Activated T-helper 2 cell treated with anti-CD3 and anti-CD28 coated beads, Interferon-gamma antibody, Interleukin-2, Interleukin-4, amounts not matched to agents 10 μg/mL and 5 μg/mL and 100 μg/mL, durations not matched to agents 14 hours and 24 hours and 36 hours (primary cell): ENCODE measurements at regions of chr3 and their contacts with region 1.

Region 1: DNA sequence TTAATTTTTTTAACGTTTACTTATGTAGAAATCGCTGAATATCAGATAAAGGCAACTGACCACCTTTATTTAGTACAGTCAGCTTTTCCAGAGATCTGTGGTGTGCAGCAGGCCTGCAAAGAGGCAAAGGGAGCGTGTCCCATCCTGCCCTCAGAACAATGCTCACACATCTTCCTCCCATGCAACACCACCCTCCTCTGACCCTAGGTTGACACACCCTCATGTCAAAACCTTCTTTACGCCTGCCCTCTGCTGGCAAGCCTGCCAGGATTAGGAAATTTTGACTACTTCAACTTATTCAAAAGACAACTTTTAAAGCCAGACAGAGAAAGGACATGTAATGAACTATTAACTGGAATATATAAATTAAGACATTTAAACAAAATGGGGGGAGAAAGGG is 513.7 kb downstream of the FOXP1 start:
- DNase-seq: peak; percentile 57
- H3K4me3 Mint-ChIP-seq: no peak overlapping the region
- H3K27ac Mint-ChIP-seq: peak overlapping the region; percentile 31
- H3K4me1 Mint-ChIP-seq: peaks cover 54% of the 10 kb centered on the region
- H3K27me3 Mint-ChIP-seq: no peaks in the 10 kb centered on the region

Region 2: DNA sequence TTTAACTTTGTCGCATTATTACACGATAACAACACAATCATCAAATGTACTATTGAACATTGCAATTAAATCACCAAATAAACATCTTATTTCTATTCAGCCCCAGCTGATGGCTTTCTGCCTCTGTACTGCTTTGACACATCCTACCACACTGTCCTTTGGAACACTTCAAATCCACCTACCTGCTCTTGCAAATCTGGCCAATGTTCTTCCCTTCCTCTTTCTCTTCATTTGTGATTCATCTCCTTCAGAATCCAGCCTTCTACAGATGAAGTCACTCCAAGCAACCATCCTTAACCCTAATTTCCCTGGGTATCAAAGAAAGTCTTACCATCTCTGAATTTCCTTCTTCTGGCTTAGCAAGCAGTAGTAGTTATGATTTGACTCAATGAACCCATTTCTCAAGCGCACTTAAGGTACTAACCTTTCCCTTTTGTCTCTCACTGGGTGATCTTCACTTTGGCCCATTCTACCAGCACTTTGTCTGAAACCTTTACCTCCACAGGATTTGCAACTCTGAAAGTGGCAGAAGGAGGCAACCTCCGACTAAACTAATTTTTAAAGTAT is 10.8 kb after region 1 on chr3:
- intact Hi-C with region 1: loop called (anchors 1 kb)
- DNase-seq: no peak
- H3K4me3 Mint-ChIP-seq: peak overlapping the region; percentile 1
- H3K27ac Mint-ChIP-seq: peak overlapping the region; percentile 5
- H3K4me1 Mint-ChIP-seq: peaks cover 75% of the 10 kb centered on the region
- H3K27me3 Mint-ChIP-seq: no peaks in the 10 kb centered on the region